CD8-positive, alpha-beta T cell (primary cell): ENCODE measurements at regions of chr15 and their contacts with region 1.

Region 1: GRCh38 chr15:64010719-64011118 is 35.6 kb downstream of the DAPK2 start:
- DNase-seq: peak; percentile 78 to 97 (median 89)
- ATAC-seq: peak; percentile 89
- H3K4me3 ChIP-seq: no peak overlapping the region
- H3K4me3 Mint-ChIP-seq: peak overlapping the region; percentile 72
- H3K27ac ChIP-seq: peak overlapping the region; percentile 52 to 67
- H3K27ac Mint-ChIP-seq: peak overlapping the region; percentile 98
- H3K4me1 ChIP-seq: peaks cover 29% of the 10 kb centered on the region
- H3K4me1 Mint-ChIP-seq: peaks cover 40% of the 10 kb centered on the region
- H3K27me3 ChIP-seq: no peaks in the 10 kb centered on the region
- H3K27me3 Mint-ChIP-seq: no peaks in the 10 kb centered on the region
- CTCF ChIP-seq: no peak

Region 2: DNA sequence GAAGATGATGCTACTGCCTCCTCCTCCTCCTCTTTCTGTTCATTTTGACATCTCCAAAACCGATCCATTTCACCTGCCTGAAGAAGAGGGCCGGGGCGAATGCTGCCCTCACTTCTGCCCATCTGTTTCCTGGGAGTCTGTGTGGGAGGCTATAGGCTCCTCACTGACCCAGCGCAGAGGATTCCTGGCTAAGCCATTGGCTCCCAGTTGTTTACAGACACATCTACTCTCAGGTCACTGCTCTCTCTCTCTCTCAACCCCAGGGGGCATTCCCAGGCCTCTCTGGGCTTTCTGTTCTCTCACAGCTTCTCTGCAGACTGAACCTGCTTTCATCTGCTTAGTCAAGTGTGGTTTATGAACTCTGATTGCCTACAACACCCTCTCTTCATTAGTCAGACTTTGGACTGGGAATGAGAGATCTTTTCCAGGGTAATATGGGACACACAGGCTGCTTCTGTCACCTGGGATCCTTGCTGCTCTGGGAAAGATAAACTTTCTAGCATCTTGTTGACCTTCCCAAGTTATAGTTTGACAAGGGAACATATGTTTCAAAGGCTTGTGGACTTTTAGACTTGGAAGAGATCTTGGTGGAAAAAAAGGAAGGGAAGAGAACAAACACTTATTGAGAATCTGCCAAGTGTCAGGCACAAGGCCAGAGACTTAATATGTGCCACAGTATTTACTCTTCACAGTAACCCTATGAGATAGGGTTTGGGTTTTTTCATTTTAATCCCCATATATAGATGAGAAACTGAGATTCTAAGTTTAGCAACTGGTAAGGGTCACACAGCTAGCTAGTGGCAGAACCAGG is 536.5 kb before region 1 on chr15:
- CTCF ChIA-PET with region 1: no interaction called
- POLR2A ChIA-PET with region 1: no interaction called
- intact Hi-C with region 1: loop called in 1 of 2 experiments (anchors 5 kb)
- DNase-seq: peak in 7 of 9 experiments; percentile 22 to 83 (median 60)
- ATAC-seq: peak; percentile 74
- H3K4me3 ChIP-seq: no peak overlapping the region
- H3K4me3 Mint-ChIP-seq: no peak overlapping the region
- H3K27ac ChIP-seq: no peak overlapping the region
- H3K27ac Mint-ChIP-seq: peak overlapping the region; percentile 94
- H3K4me1 ChIP-seq: peaks cover 43% of the 10 kb centered on the region
- H3K4me1 Mint-ChIP-seq: peaks cover 50% of the 10 kb centered on the region
- H3K27me3 ChIP-seq: no peaks in the 10 kb centered on the region
- H3K27me3 Mint-ChIP-seq: no peaks in the 10 kb centered on the region
- CTCF ChIP-seq: no peak

Region 3: DNA sequence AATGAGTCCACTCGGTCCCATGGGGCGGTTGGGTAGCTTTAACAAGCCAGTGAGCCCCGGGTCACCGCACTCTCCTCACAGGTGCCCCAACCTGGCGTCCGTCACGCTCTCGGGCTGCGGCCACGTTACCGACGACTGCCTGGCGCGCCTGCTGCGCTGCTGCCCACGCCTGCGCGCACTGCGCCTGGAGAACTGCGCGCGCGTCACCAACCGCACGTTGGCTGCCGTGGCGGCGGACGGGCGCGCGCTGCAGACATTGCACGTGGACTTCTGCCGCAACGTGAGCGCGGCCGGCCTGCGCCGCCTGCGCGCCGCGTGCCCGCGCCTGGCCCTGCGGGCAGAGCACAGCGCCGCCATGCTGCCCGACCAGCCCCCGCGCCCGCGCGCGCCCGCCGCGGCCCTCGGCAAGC is 410.1 kb before region 1 on chr15:
- CTCF ChIA-PET with region 1: no interaction called
- POLR2A ChIA-PET with region 1: no interaction called
- intact Hi-C with region 1: loop called in 1 of 2 experiments (anchors 2 kb)
- DNase-seq: peak; percentile 79 to 98 (median 90)
- ATAC-seq: peak; percentile 80
- H3K4me3 ChIP-seq: peak overlapping the region; percentile 87 to 96
- H3K4me3 Mint-ChIP-seq: peak overlapping the region; percentile 94
- H3K27ac ChIP-seq: peak overlapping the region; percentile 75 to 87
- H3K27ac Mint-ChIP-seq: peak overlapping the region; percentile 94
- H3K4me1 ChIP-seq: peaks cover 29% of the 10 kb centered on the region
- H3K4me1 Mint-ChIP-seq: peaks cover 56% of the 10 kb centered on the region
- H3K27me3 ChIP-seq: no peaks in the 10 kb centered on the region
- H3K27me3 Mint-ChIP-seq: no peaks in the 10 kb centered on the region
- CTCF ChIP-seq: no peak

Region 4: DNA sequence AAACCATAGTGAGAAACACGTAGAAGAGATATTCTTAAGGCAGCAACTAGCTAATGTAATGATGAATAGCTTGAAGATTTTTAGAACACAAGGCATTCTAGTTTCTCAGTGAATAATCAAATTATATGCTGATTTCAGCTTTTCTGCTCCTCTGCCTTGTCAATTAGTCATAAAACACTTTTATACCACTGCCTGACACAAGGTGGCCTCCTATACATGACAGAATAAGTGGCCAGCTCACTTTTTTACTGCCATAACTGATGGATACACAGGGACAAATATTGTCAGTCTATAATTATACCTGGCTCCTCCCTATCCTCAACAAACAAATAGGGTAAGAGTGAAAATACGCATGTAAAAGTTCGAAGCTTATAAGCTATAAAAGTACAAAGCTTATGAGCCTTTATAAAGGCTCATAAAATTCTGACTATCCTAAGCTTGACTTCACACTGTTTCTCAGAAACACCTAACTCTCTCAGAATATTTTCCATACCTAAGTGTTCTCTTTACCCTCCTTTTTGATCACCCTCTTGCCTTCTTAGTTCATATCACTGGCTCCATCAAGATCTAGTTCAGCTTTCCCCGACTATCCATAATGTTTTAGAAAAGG is 258.5 kb before region 1 on chr15:
- CTCF ChIA-PET with region 1: interaction called, 42 read pairs
- POLR2A ChIA-PET with region 1: interaction called, 8 read pairs
- intact Hi-C with region 1: loop called (anchors 1 to 2 kb)
- DNase-seq: peak in 7 of 9 experiments; percentile 18 to 75 (median 28)
- ATAC-seq: peak; percentile 86
- H3K4me3 ChIP-seq: no peak overlapping the region
- H3K4me3 Mint-ChIP-seq: no peak overlapping the region
- H3K27ac ChIP-seq: no peak overlapping the region
- H3K27ac Mint-ChIP-seq: peak overlapping the region; percentile 78
- H3K4me1 ChIP-seq: no peaks in the 10 kb centered on the region
- H3K4me1 Mint-ChIP-seq: peaks cover 6% of the 10 kb centered on the region
- H3K27me3 ChIP-seq: no peaks in the 10 kb centered on the region
- H3K27me3 Mint-ChIP-seq: no peaks in the 10 kb centered on the region
- CTCF ChIP-seq: peak; percentile 85

Region 5: DNA sequence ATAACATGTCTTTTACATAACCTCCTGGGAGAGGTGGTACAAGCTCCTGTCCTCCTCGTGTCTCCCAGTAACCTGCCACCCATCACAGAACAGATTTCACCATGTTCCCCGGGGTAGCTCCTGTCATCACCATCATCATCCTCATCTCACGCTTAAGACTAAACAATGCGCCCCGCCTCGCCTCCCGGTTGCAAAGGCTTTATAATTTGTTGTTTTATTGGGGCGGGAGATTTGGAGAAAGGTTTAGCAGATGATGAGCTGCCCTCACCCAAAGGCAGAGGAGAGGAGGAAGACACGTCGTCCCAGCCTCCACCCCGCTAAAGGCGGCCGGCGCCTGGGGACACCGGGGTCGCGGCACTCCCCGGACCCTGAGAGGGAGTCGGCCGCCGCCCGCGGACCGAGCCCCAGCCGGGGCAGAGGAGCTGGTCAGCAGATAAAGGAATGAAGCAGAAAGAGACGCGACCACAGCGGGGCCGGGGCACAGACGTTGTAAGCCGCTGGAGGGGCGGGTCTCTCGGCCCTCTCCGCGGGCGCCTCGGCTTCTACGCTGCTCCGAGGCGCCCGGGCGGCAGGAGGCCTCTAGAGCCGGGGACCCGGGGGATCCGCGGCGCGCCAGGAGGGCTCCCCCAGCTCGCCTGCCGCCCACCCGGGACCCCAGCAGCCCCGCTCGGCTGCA is 177.6 kb before region 1 on chr15:
- CTCF ChIA-PET with region 1: interaction called, 4 read pairs
- POLR2A ChIA-PET with region 1: interaction called, 6 read pairs
- intact Hi-C with region 1: loop called (anchors 1 to 2 kb)
- DNase-seq: peak in 7 of 9 experiments; percentile 10 to 59 (median 28)
- ATAC-seq: peak; percentile 34
- H3K4me3 ChIP-seq: peak overlapping the region; percentile 93 to 99
- H3K4me3 Mint-ChIP-seq: peak overlapping the region; percentile 98
- H3K27ac ChIP-seq: peak overlapping the region; percentile 92 to 98
- H3K27ac Mint-ChIP-seq: peak overlapping the region; percentile 94
- H3K4me1 ChIP-seq: peaks cover 40% of the 10 kb centered on the region
- H3K4me1 Mint-ChIP-seq: peaks cover 56% of the 10 kb centered on the region
- H3K27me3 ChIP-seq: no peaks in the 10 kb centered on the region
- H3K27me3 Mint-ChIP-seq: no peaks in the 10 kb centered on the region
- CTCF ChIP-seq: no peak

Region 6: GRCh38 chr15:63891079-63891767 is 119.5 kb before region 1 on chr15:
- CTCF ChIA-PET with region 1: interaction called, 3 read pairs
- POLR2A ChIA-PET with region 1: interaction called, 5 read pairs
- intact Hi-C with region 1: loop called (anchors 1 to 2 kb)
- DNase-seq: peak; percentile 48 to 83 (median 75)
- ATAC-seq: no peak
- H3K4me3 ChIP-seq: peak overlapping the region in 1 of 2 experiments; percentile 8
- H3K4me3 Mint-ChIP-seq: peak overlapping the region; percentile 5
- H3K27ac ChIP-seq: peak overlapping the region; percentile 35 to 68
- H3K27ac Mint-ChIP-seq: peak overlapping the region; percentile 90
- H3K4me1 ChIP-seq: peaks cover 65% of the 10 kb centered on the region
- H3K4me1 Mint-ChIP-seq: peaks cover 69% of the 10 kb centered on the region
- H3K27me3 ChIP-seq: no peaks in the 10 kb centered on the region
- H3K27me3 Mint-ChIP-seq: no peaks in the 10 kb centered on the region
- CTCF ChIP-seq: peak; percentile 71

Region 7: DNA sequence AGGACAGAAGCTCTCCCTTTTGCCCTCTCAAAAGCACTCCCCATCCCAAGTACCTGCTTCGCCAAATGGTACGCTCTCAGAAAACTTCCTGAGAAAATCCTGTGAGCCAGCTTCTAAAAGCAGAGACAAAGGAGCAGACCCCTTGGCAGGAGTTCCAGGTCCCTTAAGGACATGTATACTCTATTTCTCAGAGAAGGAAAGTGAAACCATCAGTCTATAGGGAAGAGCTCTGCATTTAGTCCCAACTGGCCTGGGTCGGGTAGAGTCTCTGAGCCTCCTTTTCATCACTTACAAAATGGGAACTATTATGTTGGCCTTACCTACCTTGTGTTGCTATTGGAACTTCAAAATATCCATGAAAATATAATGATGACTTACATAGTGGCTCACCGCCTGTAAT is 15.9 kb after region 1 on chr15:
- CTCF ChIA-PET with region 1: interaction called, 4 read pairs
- POLR2A ChIA-PET with region 1: interaction called, 6 read pairs
- intact Hi-C with region 1: loop called in 1 of 2 experiments (anchors 2 kb)
- DNase-seq: no peak
- ATAC-seq: no peak
- H3K4me3 ChIP-seq: no peak overlapping the region
- H3K4me3 Mint-ChIP-seq: no peak overlapping the region
- H3K27ac ChIP-seq: no peak overlapping the region
- H3K27ac Mint-ChIP-seq: no peak overlapping the region
- H3K4me1 ChIP-seq: peaks cover 4% of the 10 kb centered on the region
- H3K4me1 Mint-ChIP-seq: peaks cover 19% of the 10 kb centered on the region
- H3K27me3 ChIP-seq: no peaks in the 10 kb centered on the region
- H3K27me3 Mint-ChIP-seq: no peaks in the 10 kb centered on the region
- CTCF ChIP-seq: no peak